Natural killer cell (primary cell): ENCODE measurements at regions of chr1 and their contacts with region 1.

Region 1: DNA sequence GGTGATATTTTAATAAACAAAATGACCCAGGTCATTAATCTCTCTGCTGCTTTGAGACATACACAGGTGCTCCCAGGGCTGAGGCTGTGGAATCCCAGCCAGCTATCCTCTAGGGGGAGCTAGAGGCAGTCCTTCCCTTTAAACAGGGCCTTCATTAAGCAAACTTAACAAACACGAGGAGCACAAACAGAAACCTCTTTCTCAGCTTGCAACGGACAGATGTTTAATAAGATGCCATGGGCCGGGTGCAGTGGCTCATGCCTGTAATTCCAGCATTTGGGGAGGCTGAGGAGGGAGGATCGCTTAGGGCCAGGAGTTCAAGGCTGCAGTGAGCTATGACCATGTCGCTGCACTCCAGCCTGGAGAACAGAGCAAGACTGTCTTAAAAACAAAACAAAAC is 106.7 kb downstream of the HIVEP3 start:
- DNase-seq: peak in 1 of 2 donors; percentile 75
- ATAC-seq: peak; percentile 54 to 69 (median 59)
- H3K4me3 ChIP-seq: no peak overlapping the region
- H3K4me3 Mint-ChIP-seq: peak overlapping the region; percentile 8
- H3K27ac ChIP-seq: no peak overlapping the region
- H3K27ac Mint-ChIP-seq: peak overlapping the region in 1 of 2 donors; percentile 68
- H3K4me1 ChIP-seq: peaks cover 46% of the 10 kb centered on the region
- H3K4me1 Mint-ChIP-seq: peaks cover 56 to 58% of the 10 kb centered on the region in 2 donors
- H3K27me3 ChIP-seq: no peaks in the 10 kb centered on the region
- H3K27me3 Mint-ChIP-seq: no peaks in the 10 kb centered on the region
- CTCF ChIP-seq: peak; percentile 68

Region 2: DNA sequence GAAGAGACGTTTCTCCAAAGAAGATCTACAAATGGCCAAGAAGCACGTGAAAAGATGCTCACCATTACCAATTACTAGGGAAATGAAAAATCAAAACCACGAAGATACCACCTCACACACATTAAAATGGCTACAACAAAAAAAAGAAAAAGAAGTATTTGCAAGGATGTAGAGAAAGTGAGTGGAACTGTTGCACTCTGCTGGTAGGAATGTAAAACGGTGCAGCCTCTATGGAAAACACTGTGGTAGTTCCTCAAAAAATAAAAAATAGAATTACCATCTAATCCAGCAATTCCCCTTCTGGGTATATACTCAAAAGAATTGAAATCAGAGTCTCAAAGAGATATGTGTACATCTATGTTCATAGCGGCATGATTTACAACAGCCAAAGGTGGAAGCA is 212.1 kb before region 1 on chr1:
- intact Hi-C with region 1: no loop called
- DNase-seq: no peak
- ATAC-seq: no peak
- H3K4me3 ChIP-seq: no peak overlapping the region
- H3K4me3 Mint-ChIP-seq: no peak overlapping the region
- H3K27ac ChIP-seq: no peak overlapping the region
- H3K27ac Mint-ChIP-seq: no peak overlapping the region
- H3K4me1 ChIP-seq: no peaks in the 10 kb centered on the region
- H3K4me1 Mint-ChIP-seq: peaks cover 8 to 15% of the 10 kb centered on the region in 2 donors
- H3K27me3 ChIP-seq: no peaks in the 10 kb centered on the region
- H3K27me3 Mint-ChIP-seq: no peaks in the 10 kb centered on the region
- CTCF ChIP-seq: no peak

Region 3: DNA sequence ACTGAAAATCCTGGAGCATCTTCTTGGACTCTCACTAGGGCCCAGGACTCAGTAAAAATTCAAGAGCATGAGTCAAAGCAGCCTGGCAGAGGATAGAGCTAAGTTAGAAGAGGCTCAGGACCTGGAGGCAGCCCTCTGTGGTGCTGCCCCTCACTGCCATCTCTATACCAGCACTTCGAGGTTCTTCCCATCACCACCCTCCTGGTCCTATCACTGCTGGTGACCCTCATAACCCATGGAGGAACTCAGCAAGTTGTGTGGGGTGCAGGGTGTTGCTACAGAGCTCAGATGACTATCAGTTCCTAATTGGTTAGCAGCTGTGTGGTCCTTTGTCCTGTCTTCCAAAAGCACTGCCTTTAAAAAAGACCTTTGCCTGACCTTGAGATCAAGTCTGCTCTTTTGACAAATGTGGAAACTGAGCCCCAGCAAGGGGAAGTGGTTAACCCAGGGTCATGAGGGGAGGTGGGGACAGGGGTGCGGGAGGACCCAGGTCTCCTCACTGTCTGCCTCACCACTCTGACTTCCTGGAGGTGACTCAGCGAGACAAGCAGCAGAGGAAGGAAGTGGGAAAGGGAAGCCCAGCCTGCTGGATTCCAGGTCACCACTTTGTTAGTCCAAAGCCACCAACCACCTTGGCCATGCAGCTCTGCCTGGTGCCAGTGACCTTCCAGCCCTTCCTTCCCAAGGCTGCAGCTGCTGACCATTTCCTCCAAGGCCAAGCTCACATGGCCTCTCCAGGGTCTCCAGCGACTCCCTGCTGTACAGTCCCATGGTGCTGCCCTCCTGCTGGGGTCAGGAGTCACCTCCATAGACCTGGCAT is 128.2 kb before region 1 on chr1:
- intact Hi-C with region 1: loop called (anchors 5 kb)
- DNase-seq: peak in 1 of 2 donors; percentile 51
- ATAC-seq: peak; percentile 56 to 69 (median 65)
- H3K4me3 ChIP-seq: no peak overlapping the region
- H3K4me3 Mint-ChIP-seq: peak overlapping the region; percentile 78
- H3K27ac ChIP-seq: peak overlapping the region; percentile 42
- H3K27ac Mint-ChIP-seq: peak overlapping the region; percentile 69 to 82
- H3K4me1 ChIP-seq: peaks cover 69% of the 10 kb centered on the region
- H3K4me1 Mint-ChIP-seq: peaks cover 100% of the 10 kb centered on the region in 2 donors
- H3K27me3 ChIP-seq: no peaks in the 10 kb centered on the region
- H3K27me3 Mint-ChIP-seq: no peaks in the 10 kb centered on the region
- CTCF ChIP-seq: no peak

Region 4: GRCh38 chr1:41919764-41920397 is 107.8 kb after region 1 on chr1:
- intact Hi-C with region 1: loop called (anchors 5 kb)
- DNase-seq: peak; percentile 73 to 88
- ATAC-seq: peak; percentile 74 to 81 (median 78)
- H3K4me3 ChIP-seq: peak overlapping the region; percentile 47
- H3K4me3 Mint-ChIP-seq: peak overlapping the region; percentile 94
- H3K27ac ChIP-seq: peak overlapping the region; percentile 80
- H3K27ac Mint-ChIP-seq: peak overlapping the region; percentile 93 to 95
- H3K4me1 ChIP-seq: peaks cover 48% of the 10 kb centered on the region
- H3K4me1 Mint-ChIP-seq: peaks cover 69 to 71% of the 10 kb centered on the region in 2 donors
- H3K27me3 ChIP-seq: no peaks in the 10 kb centered on the region
- H3K27me3 Mint-ChIP-seq: no peaks in the 10 kb centered on the region
- CTCF ChIP-seq: no peak

Region 5: DNA sequence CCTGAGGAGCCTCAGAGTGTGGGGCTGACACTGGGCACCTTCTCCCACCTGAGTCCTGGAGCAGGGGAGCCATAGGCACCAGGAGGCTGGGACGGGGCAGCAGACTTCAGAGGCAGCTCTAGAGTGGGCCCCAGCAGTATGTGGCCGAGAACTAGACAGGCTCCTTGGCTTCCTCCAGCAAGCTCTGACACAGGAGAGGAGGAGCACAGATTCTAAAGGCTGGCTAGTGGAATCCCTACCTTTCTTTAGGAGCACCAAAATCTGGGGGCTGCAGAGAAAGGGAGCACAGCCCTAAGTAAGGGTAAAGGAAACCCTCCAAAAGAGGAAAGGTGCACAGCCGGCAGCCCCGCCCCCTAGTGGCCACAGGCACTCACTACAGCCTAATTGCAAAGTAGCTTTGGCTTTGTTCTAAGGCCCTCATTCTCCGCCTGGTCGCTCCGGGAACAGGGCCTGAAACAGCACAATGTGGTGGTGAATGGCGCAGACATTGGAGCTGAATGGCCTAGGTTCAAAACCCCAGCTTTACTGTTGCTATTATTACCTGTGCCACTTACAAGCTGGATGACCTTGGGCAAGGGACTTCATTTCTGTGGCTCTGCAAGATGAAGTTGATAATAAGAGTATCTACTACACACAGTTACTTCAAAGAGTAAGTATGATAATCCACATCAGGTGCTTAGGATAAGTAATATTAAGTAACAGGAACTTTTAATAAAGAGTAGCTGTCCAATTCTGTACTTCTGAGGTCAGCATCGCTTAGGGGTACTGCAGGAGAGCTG is 361.3 kb after region 1 on chr1:
- intact Hi-C with region 1: loop called (anchors 5 kb)
- DNase-seq: peak; percentile 65 to 74
- ATAC-seq: peak; percentile 75 to 86 (median 83)
- H3K4me3 ChIP-seq: no peak overlapping the region
- H3K4me3 Mint-ChIP-seq: no peak overlapping the region
- H3K27ac ChIP-seq: no peak overlapping the region
- H3K27ac Mint-ChIP-seq: no peak overlapping the region
- H3K4me1 ChIP-seq: no peaks in the 10 kb centered on the region
- H3K4me1 Mint-ChIP-seq: peaks cover 0 to 4% of the 10 kb centered on the region in 2 donors
- H3K27me3 ChIP-seq: no peaks in the 10 kb centered on the region
- H3K27me3 Mint-ChIP-seq: no peaks in the 10 kb centered on the region
- CTCF ChIP-seq: peak; percentile 93